HepG2 (cell line): ENCODE measurements at regions of chr3 and their contacts with region 1.

Region 1: DNA sequence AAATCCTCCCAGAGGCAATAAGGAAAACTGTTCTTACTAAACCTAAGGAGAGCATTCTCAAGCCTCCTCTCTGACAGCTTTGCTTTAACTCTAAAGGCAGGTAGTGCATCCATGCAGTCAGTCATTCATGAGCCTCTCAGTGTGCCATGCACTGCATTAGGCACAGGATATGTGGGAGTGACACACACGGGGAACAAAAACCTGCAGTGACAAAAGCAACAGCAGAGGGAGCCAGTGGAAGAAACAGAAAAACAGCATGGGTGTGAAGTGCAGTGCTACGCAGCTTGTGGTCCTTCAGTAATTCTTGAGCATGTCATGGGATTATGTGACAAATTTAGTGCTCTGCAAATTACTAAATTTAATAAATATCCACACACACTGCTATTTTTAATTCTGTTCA is 230.7 kb downstream of the BBX start:
- DNase-seq: peak; percentile 47
- ATAC-seq: peak; percentile 98
- H3K4me3 ChIP-seq: no peak overlapping the region
- H3K27ac ChIP-seq: no peak overlapping the region
- H3K4me1 ChIP-seq: no peaks in the 10 kb centered on the region
- H3K27me3 ChIP-seq: no peaks in the 10 kb centered on the region
- CTCF ChIP-seq: peak; percentile 76
- EP300 ChIP-seq: no peak
- POLR2A ChIP-seq: no peak
- RAD21 ChIP-seq: 0 out of 2 replicates have a peak, but pooled peaks have one; percentile 39

Region 2: DNA sequence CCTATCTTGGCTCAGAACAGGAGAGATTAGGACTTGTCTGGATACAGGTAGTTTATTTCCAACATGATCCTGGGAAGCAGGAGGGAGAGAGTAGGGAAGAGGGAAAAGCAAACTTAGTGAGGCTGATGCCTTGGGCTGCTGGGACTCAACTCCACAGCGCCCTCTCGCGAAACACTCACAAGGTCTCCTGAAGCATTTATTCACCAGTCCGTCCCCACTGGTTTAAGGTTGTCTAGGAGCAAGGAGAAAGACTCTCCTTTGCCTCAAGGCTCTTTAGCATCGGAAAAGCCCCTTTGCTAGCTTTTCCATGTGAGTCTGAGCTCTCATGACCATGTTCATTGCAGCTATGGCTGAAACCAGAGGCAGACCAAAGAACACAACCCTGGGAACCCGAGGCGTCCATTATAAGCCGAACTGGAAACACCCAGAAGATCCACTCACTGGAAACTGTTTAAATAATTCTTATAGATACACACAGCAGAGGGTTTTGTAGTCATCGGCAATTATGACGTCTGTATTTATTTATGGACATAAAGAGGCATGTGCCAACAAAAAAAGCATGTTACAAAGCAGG is 92.9 kb after region 1 on chr3:
- CTCF ChIA-PET with region 1: interaction called, 12 read pairs
- POLR2A ChIA-PET with region 1: no interaction called
- in situ Hi-C with region 1: loop called (anchors 10 kb)
- intact Hi-C with region 1: loop called (anchors 1 kb)
- DNase-seq: peak; percentile 47
- ATAC-seq: peak; percentile 97
- H3K4me3 ChIP-seq: peak overlapping the region in 1 of 3 experiments; percentile 0; a peak in 1 of 6 replicates
- H3K27ac ChIP-seq: no peak overlapping the region
- H3K4me1 ChIP-seq: peaks cover 35% of the 10 kb centered on the region
- H3K27me3 ChIP-seq: peaks cover 0 to 15% of the 10 kb centered on the region in 2 experiments; a peak in 2 of 5 replicates
- CTCF ChIP-seq: peak; percentile 89
- EP300 ChIP-seq: no peak
- POLR2A ChIP-seq: no peak
- RAD21 ChIP-seq: peak; percentile 74